CD4-positive, alpha-beta T cell (primary cell): ENCODE measurements at regions of chr1 and their contacts with region 1.

Region 1: DNA sequence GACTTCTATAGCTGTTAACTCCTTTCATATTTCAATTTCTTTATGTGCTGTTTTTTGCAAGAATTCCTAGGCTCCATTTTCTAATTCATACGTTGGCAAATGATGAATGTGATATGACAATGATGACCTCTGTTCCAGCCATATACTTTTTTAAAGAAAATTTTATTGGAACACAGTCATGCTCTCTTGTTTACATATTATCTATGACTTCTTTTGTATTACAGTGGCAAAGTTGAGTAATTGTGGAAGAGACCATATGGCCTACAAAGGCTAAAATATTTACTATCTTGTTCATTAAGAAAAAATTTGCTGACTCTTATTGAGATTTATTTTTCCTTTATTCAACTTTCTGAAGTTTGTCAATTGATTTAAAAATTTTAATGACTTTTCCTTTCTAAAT is 7.1 kb downstream of the IFI44L start:
- DNase-seq: no peak
- ATAC-seq: no peak
- H3K4me3 ChIP-seq: no peak overlapping the region
- H3K4me3 Mint-ChIP-seq: no peak overlapping the region
- H3K27ac ChIP-seq: no peak overlapping the region
- H3K27ac Mint-ChIP-seq: peak overlapping the region; percentile 1
- H3K4me1 ChIP-seq: peaks cover 8% of the 10 kb centered on the region
- H3K4me1 Mint-ChIP-seq: peaks cover 58% of the 10 kb centered on the region
- H3K27me3 ChIP-seq: no peaks in the 10 kb centered on the region
- H3K27me3 Mint-ChIP-seq: no peaks in the 10 kb centered on the region
- CTCF ChIP-seq: no peak

Region 2: GRCh38 chr1:78649628-78650027 is 22.3 kb after region 1 on chr1 and contains the start of gene IFI44:
- CTCF ChIA-PET with region 1: interaction called, 3 read pairs
- POLR2A ChIA-PET with region 1: interaction called, 29 read pairs
- intact Hi-C with region 1: loop called in 1 of 2 experiments (anchors 2 kb)
- DNase-seq: peak; percentile 59 to 90 (median 73)
- ATAC-seq: peak; percentile 81
- H3K4me3 ChIP-seq: peak within 1 kb of the TSS; percentile 65
- H3K4me3 Mint-ChIP-seq: peak within 1 kb of the TSS; percentile 92
- H3K27ac ChIP-seq: peak within 1 kb of the TSS; percentile 30 to 55
- H3K27ac Mint-ChIP-seq: peak within 1 kb of the TSS; percentile 80
- H3K4me1 ChIP-seq: peaks cover 30% of the 10 kb centered on the region
- H3K4me1 Mint-ChIP-seq: peaks cover 81% of the 10 kb centered on the region
- H3K27me3 ChIP-seq: no peaks in the 10 kb centered on the region
- H3K27me3 Mint-ChIP-seq: no peaks in the 10 kb centered on the region
- CTCF ChIP-seq: no peak
- total RNA-seq, gene IFI44: 67.4 to 70.0 TPM